ENCODE measurements at regions of chr3 and their contacts with region 1.

Region 1: DNA sequence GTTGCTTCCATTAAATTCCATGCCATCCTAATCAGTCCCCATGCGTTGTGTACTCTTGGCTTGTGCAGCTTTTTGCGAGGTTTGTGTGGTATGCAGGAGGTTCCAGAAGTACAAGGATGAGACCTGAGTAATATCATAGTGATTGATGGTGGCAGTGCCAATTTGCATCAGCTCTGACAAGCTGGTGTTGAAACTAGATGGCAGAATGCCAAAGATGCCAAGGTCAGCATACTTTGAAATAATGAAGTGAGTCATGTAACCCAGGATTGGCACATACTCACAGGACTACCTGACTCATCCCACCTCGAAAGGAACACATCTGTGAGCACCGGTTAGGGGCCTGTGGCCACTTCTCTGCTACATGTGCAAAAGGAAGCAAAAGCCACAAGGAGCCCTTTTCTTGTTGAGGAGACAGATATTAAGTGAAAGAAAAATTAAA is 14.3 kb downstream of the KAT2B start:
- DNase-seq: peak; percentile 100
- ATAC-seq: peak; percentile 86
- H3K4me3 ChIP-seq: no peak overlapping the region
- H3K27ac ChIP-seq: peak overlapping the region; percentile 66
- H3K4me1 ChIP-seq: peaks cover 45% of the 10 kb centered on the region
- H3K27me3 ChIP-seq: no peaks in the 10 kb centered on the region
- CTCF ChIP-seq: no peak

Region 2: DNA sequence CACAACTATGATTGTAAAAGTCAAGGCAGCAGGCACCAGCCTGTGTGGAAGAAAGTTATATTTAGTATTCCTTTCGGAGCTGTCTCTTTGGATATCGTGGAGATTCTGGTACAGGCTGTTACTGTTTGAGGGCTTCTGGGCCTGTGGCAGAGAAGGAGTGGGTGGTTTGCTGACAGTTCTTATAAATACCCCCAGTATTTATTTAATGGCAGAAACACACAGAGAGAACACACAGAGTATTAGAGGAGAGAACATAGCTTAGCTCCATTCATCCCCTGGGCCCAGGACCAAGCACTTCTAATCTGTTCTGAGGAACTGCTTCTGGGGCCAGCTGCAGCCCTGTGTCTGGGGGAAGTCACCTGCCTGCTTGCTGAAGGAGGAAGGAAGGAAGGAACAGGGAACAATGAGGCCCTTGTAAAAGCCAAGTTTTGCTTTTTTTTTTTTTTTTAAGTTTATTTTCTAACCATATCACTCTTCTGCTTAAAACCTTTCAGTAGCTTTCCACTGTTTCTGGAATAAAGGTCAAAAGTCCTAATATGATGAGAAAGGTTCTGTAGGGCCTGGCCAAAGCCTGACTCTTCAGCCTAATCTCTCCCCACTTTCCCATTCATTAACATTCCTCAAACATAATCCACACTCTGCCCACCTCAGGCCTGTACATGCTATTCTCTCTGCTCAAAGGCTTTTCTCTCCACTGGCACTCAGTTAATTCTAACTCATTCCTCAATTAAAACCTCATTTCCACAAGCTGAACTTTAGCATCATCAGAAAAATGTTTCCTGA is 30.8 kb before region 1 on chr3:
- CTCF ChIA-PET with region 1: no interaction called
- POLR2A ChIA-PET with region 1: no interaction called
- intact Hi-C with region 1: loop called (anchors 1 kb)
- DNase-seq: no peak
- ATAC-seq: peak; percentile 44
- H3K4me3 ChIP-seq: no peak overlapping the region
- H3K27ac ChIP-seq: no peak overlapping the region
- H3K4me1 ChIP-seq: peaks cover 11% of the 10 kb centered on the region
- H3K27me3 ChIP-seq: no peaks in the 10 kb centered on the region
- CTCF ChIP-seq: no peak

Region 3: DNA sequence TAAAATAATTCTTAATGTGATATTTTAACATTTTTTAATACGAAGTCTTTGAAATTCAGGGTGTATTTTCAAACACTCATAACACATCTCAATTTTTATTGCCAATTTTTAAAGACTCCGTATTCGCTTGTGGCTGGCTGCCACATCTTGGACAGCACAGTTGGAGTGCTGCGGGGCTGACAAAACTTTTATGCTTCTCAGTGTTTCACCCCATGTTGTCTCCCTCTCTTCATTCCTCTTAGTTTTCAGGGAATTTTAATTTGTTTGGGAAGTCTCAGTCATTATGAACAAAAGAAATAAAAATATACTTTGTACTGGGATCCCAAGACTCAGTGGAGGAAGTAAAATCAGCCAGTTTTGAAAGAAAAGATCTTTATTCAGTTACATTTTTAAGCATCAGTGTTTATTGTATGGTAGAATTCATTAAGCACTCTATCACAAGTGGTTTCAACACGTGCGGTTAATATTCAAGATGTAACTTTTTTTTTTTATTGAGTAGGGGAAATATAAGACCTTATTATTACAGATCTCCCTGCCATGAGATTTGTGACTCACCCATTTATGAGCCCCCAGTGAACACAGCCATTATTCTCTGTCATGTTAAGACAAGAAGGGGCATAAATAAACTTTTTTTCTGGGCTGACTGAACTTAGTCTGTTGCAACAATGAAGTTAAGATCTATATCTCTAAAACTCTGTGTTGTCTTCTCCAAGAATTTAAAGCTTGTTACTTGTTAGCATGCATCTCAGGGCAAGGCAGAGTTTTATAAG is 12.5 kb after region 1 on chr3:
- CTCF ChIA-PET with region 1: no interaction called
- POLR2A ChIA-PET with region 1: no interaction called
- intact Hi-C with region 1: loop called (anchors 1 kb)
- DNase-seq: peak; percentile 54
- ATAC-seq: peak; percentile 71
- H3K4me3 ChIP-seq: no peak overlapping the region
- H3K27ac ChIP-seq: 0 out of 2 replicates have a peak overlapping the region, but pooled peaks have one; percentile 1
- H3K4me1 ChIP-seq: peaks cover 21% of the 10 kb centered on the region
- H3K27me3 ChIP-seq: no peaks in the 10 kb centered on the region
- CTCF ChIP-seq: no peak

Region 4: GRCh38 chr3:20111836-20112235 is 57.3 kb after region 1 on chr3:
- CTCF ChIA-PET with region 1: no interaction called
- POLR2A ChIA-PET with region 1: no interaction called
- intact Hi-C with region 1: loop called (anchors 5 kb)
- DNase-seq: peak; percentile 84
- ATAC-seq: peak; percentile 94
- H3K4me3 ChIP-seq: peak overlapping the region; percentile 9; the same call in 1 of the 2 replicates
- H3K27ac ChIP-seq: peak overlapping the region; percentile 71
- H3K4me1 ChIP-seq: peaks cover 32% of the 10 kb centered on the region
- H3K27me3 ChIP-seq: no peaks in the 10 kb centered on the region
- CTCF ChIP-seq: no peak

Measured in PC-3 (cell line).